Esophagus squamous epithelium (tissue), 5 donors: ENCODE measurements at regions of chr5 and their contacts with region 1.

Region 1: GRCh38 chr5:53430261-53431252 is 49.9 kb upstream of the FST start:
- DNase-seq: no peak
- H3K4me3 ChIP-seq: no peak overlapping the region
- H3K27ac ChIP-seq: no peak overlapping the region
- H3K4me1 ChIP-seq: no peaks in the 10 kb centered on the region
- H3K27me3 ChIP-seq: no peaks in the 10 kb centered on the region
- CTCF ChIP-seq: peak in 5 of 6 experiments; percentile 24 to 67 (median 40)
- POLR2A ChIP-seq: no peak

Region 2: DNA sequence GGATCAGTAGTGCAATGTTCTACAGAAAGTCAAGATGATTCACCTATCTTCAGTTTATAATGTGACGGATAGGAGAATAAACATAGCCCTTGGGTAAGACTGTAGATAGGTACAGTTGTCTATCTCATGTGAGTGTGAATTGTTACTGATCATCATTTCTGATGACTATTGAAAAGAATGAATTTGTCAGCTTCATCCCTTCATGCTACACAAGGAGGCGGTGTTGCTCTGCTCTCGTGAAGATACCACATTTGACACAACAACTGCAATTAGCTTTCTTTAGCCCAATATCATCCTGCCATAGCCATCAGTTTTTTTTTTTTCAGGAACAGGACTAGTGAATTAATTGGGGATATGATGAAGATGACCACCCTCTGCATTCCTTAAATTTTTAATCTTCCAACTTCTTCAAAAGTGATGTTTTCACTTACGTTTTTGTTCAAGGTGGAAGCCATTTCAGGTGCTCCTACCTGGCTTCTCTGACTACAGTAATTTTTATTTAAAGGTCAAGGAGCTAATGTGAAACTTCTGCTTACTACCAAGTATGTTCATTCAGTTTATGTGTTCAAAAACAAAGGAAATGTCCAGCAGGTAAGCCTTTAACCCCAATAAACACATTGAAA is 168.1 kb before region 1 on chr5:
- intact Hi-C with region 1: loop called (anchors 10 kb)
- DNase-seq: no peak
- H3K4me3 ChIP-seq: no peak overlapping the region
- H3K27ac ChIP-seq: no peak overlapping the region
- H3K4me1 ChIP-seq: peaks cover 0 to 8% (median 0%) of the 10 kb centered on the region in 3 donors
- H3K27me3 ChIP-seq: no peaks in the 10 kb centered on the region
- CTCF ChIP-seq: peak in 4 of 6 experiments; percentile 24 to 68 (median 41)
- POLR2A ChIP-seq: no peak

Region 3: DNA sequence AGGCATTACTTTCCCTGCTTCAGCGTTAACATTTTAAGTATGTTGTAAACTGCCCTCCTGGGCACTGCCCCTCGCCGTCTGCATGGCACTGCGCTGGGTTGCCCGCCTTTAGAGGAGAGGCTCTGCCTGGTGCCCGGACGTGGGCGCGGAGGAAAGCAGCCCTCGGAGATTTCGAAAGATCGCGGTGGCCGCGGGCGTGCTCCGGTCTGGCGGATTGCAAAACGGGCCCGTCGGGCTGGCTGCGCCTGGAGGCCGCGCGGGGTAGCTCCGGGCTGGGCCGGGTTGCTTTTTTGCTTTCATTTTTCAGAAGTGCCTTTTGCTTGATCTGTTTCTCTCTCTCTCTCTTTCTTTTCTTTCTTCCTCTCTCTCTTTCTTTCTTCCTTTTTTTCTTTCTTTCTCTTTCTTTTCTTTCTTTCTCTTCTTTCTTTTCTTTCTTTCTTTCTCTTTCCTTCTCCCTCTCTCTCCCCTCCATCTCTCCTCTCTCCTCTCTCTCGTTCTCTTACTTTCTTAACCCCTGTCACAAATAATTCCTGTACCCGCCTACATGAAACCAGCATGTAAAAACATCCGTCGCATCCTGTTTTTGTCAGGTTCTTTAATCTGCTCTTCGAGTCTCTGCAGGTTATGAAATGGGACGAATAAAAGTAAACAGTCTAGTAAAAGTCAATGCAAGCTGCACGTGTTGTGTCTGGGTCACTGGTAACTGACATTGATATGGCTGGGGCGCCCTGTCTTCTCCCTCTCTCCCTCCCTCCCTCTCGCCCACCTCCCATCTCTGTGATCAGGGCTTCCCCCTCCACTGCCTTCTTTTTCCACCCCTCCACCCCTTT is 51.5 kb after region 1 on chr5:
- intact Hi-C with region 1: no loop called
- DNase-seq: no peak
- H3K4me3 ChIP-seq: peak overlapping the region; percentile 39 to 78 (median 68)
- H3K27ac ChIP-seq: peak overlapping the region; percentile 35 to 83 (median 72)
- H3K4me1 ChIP-seq: peaks cover 11 to 53% (median 22%) of the 10 kb centered on the region in 3 donors
- H3K27me3 ChIP-seq: peaks cover 0 to 42% (median 0%) of the 10 kb centered on the region in 4 donors
- CTCF ChIP-seq: peak in 4 of 6 experiments; percentile 20 to 50 (median 41)
- POLR2A ChIP-seq: no peak